Endothelial cell of umbilical vein (primary cell): ENCODE measurements at regions of chr19 and their contacts with region 1.

Region 1: DNA sequence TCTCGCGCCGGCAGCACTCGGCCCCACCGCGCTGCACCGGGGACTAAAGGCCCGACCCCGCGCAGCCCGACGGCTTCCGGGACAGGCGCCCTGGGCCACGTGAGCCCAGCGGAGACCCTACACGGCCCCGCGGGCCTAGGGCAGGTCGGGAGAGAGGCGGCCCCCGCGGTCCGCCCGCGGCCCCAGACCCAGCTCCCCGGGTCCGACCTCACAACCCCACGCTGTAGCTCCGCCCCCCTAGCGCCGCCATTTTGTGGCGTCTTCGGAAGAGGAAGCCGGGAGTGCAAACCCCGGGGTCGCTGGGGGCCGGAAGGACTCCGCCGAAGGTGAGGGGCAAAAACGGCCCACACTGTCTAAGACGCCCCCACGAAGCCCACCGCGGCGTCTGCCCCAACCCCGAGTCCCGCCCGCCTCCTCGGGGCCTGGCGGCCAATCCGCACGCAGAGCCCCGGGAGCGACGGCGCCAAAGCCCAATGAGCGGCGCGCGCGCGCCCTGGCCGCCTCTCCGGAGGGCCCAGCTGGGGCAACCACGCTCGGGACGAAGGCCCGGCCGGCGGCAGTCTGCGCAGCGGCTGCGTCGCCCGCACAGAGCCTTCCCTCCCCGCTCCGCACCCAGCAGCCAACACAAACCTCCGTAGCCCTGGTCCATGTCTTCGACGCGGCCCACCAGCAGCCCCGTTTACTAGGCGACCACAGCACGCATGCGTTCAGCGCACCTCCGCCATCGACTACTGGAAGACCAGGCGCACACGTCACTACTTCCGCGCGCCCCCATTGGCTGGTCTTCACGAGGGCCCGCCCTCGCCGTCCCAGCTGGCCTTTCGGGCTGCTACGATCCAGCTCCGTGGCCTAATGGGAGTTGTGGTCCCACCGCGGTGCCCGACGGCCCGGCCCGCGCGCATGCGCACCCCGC is at the start of gene AKAP8:
- DNase-seq: peak; percentile 99
- H3K4me3 ChIP-seq: peak within 1 kb of the TSS; percentile 82 to 90 (median 85)
- H3K27ac ChIP-seq: peak within 1 kb of the TSS; percentile 85
- H3K4me1 ChIP-seq: peaks cover 20% of the 10 kb centered on the region
- H3K27me3 ChIP-seq: no peaks in the 10 kb centered on the region
- CTCF ChIP-seq: no peak
- POLR2A ChIP-seq: peak; percentile 85
- total RNA-seq, gene AKAP8: 42.6 and 44.1 TPM in 2 replicates

Region 2: GRCh38 chr19:15107061-15108010 is 272.0 kb before region 1 on chr19 and contains the start of gene SYDE1:
- CTCF ChIA-PET with region 1: no interaction called
- POLR2A ChIA-PET with region 1: no interaction called
- dilution Hi-C with region 1: no loop called
- intact Hi-C with region 1: loop called (anchors 5 kb)
- DNase-seq: peak; percentile 26
- H3K4me3 ChIP-seq: peak within 1 kb of the TSS; percentile 82 to 93 (median 93)
- H3K27ac ChIP-seq: peak within 1 kb of the TSS; percentile 60
- H3K4me1 ChIP-seq: peaks cover 8% of the 10 kb centered on the region
- H3K27me3 ChIP-seq: no peaks in the 10 kb centered on the region
- CTCF ChIP-seq: no peak
- POLR2A ChIP-seq: peak; percentile 75
- total RNA-seq, gene SYDE1: 35.3 and 38.2 TPM in 2 replicates

Region 3: DNA sequence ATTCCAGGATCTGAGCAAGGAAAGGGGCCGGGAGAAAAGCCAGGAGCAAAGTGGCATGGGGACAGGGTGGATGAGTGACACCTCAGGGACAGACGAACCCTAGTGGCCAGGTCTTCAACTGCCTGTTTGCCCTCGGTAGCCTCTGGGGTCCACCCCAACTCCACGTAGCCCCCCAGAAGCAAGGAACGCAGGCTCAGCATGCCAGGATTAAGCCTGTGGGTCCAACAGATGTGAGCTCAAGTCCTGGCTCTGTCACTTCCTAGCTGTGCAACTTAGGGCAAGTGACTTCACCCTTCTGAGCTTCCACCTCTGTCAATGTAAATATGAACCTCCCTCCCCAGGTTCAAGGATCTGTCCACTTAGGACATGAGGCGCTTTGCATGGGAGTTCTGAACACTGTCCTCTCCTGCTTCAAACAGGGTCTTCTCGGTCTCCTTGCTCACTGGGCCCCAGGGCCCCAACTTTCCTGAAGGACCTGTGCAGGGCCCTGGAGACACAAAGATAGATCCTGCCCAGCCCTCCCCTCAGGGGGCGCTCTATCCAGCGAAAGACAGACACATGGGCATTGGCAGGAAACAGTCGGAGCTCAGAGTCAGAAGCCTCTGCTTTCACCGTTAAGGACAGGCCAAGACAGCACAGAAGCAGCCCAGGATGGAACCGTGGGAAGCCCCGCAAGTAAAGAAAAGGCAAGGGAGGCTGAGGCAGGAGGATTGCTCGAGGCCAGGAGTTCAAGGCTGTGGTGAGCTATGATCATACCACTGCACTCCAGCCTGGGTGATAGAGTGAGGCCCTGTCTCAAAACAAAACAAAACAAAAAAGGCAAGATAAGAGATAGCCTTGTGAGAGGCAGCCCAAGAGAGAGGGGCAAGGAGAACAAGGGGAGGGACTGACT is 259.0 kb before region 1 on chr19:
- CTCF ChIA-PET with region 1: no interaction called
- POLR2A ChIA-PET with region 1: interaction called, 10 read pairs
- dilution Hi-C with region 1: no loop called
- intact Hi-C with region 1: no loop called
- DNase-seq: no peak
- H3K4me3 ChIP-seq: no peak overlapping the region
- H3K27ac ChIP-seq: no peak overlapping the region
- H3K4me1 ChIP-seq: no peaks in the 10 kb centered on the region
- H3K27me3 ChIP-seq: no peaks in the 10 kb centered on the region
- CTCF ChIP-seq: no peak
- POLR2A ChIP-seq: no peak

Region 4: GRCh38 chr19:15331419-15332310 is 47.7 kb before region 1 on chr19:
- CTCF ChIA-PET with region 1: no interaction called
- POLR2A ChIA-PET with region 1: no interaction called
- dilution Hi-C with region 1: no loop called
- intact Hi-C with region 1: loop called (anchors 1 kb)
- DNase-seq: no peak
- H3K4me3 ChIP-seq: peak overlapping the region; percentile 74 to 92 (median 82)
- H3K27ac ChIP-seq: peak overlapping the region; percentile 86
- H3K4me1 ChIP-seq: peaks cover 24% of the 10 kb centered on the region
- H3K27me3 ChIP-seq: no peaks in the 10 kb centered on the region
- CTCF ChIP-seq: no peak
- POLR2A ChIP-seq: no peak

Region 5: DNA sequence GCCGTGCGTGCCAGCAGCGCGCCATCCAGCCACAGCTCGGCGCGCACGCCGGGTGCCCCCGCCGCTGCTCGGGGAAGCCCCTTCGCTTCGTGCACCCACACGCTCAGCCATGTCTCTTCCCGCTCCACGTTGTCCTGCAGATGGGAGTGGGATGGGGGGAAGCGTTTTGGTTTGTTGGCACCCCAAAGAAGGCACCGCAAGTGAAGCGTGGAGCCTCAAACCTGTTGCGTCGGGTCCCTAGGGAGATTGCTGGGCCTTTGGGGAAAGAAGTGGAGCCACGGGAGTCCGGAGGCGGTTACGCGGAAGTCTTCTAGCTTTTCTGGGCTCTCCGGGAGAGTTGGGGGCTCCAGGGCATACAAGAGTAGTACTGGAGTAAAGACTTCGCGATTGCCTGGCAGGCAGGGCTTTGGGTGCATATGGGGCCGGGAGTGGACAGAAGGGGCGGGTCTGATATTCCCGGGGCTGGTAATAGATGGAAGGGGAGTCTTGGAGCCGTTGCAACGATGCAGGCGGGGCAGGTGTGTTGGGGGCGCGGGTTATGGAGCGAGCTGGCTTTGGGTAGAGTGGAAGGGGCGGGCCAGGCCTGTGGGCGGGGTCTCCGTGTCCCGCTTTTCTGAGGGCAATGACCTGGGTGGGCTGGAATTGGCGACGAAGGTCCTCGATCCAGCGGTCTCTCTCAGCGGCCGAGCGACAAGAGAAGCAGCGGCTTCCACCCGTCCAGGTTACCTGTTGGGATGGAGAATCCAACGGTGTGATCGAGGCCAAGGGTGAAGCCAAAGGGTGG is 78.6 kb after region 1 on chr19:
- CTCF ChIA-PET with region 1: no interaction called
- POLR2A ChIA-PET with region 1: no interaction called
- dilution Hi-C with region 1: no loop called
- intact Hi-C with region 1: no loop called
- DNase-seq: no peak
- H3K4me3 ChIP-seq: no peak overlapping the region
- H3K27ac ChIP-seq: no peak overlapping the region
- H3K4me1 ChIP-seq: peaks cover 5% of the 10 kb centered on the region
- H3K27me3 ChIP-seq: peaks cover 19% of the 10 kb centered on the region in 2 experiments
- CTCF ChIP-seq: no peak
- POLR2A ChIP-seq: no peak